Activated CD8-positive, alpha-beta T cell treated with anti-CD3 and anti-CD28 coated beads for 36 hours (primary cell): ENCODE measurements at regions of chr10 and their contacts with region 1.

Region 1: DNA sequence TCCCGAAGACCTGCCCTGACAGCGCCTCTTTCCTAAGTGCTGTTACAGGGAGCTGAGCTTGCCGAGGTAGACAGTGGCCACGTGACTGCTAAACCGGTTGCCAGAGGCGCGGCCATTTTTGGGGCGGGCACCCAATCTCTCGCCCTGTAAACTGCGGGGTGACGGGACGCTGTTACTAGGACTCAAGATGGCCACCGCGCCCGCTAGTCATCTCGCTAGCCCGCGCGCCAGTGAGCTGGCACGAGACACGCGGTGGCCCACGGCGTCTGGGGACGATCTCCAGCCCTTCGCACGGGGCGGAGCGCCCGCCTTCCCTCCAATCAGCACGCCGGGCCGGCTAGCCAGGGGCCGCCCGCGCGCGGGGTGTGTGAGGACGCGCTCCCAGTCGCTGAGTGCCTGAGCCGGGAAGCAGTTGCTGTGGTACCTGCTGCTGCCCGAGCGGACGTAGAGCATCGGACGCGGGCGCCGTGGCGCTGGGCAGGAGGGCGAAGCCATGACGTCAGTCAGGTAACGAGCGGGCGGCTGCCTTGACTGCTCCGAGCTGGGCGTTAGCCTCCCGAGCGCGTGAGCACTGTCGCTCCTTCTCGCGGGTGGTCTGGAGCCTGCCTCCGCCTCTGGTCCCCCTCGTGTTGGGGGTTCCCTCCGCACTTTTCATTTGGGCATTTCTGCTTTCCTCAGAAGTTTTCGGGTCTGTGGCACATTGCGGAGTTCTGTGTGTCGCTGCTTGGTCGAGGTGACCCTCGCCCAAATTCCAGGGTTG is 25.5 kb downstream of the ADK start:
- DNase-seq: peak; percentile 98
- ATAC-seq: peak; percentile 91
- H3K4me3 Mint-ChIP-seq: peak overlapping the region; percentile 93
- H3K27ac Mint-ChIP-seq: peak overlapping the region; percentile 96
- H3K4me1 Mint-ChIP-seq: peaks cover 32% of the 10 kb centered on the region
- H3K27me3 Mint-ChIP-seq: no peaks in the 10 kb centered on the region
- CTCF ChIP-seq: no peak

Region 2: DNA sequence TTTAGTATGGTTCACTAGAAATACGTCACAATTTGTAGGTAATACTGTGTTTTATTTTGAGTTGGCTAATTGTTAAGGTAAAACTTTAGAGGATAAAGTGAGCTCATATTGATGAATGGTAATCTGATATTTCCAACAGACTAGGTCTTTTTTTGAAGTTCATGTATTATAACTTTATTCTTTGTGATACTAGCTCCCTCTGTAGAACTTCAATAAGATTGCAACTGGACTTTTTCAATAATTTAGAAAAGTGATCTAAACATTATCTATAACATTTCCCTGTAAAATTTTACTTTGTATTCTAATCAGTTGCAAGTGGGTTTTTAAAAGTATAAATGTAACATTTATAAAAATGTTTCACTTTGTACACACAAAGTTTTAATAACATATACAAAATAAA is 58.0 kb after region 1 on chr10:
- CTCF ChIA-PET with region 1: no interaction called
- POLR2A ChIA-PET with region 1: interaction called, 3 read pairs
- intact Hi-C with region 1: loop called (anchors 10 kb)
- DNase-seq: no peak
- ATAC-seq: no peak
- H3K4me3 Mint-ChIP-seq: no peak overlapping the region
- H3K27ac Mint-ChIP-seq: no peak overlapping the region
- H3K4me1 Mint-ChIP-seq: peaks cover 10% of the 10 kb centered on the region
- H3K27me3 Mint-ChIP-seq: no peaks in the 10 kb centered on the region
- CTCF ChIP-seq: peak; percentile 28

Region 3: GRCh38 chr10:74290708-74291107 is 114.1 kb after region 1 on chr10:
- CTCF ChIA-PET with region 1: no interaction called
- POLR2A ChIA-PET with region 1: no interaction called
- intact Hi-C with region 1: no loop called
- DNase-seq: no peak
- ATAC-seq: no peak
- H3K4me3 Mint-ChIP-seq: no peak overlapping the region
- H3K27ac Mint-ChIP-seq: no peak overlapping the region
- H3K4me1 Mint-ChIP-seq: peaks cover 7% of the 10 kb centered on the region
- H3K27me3 Mint-ChIP-seq: no peaks in the 10 kb centered on the region
- CTCF ChIP-seq: no peak